Mammary epithelial cell (primary cell): ENCODE measurements at regions of chr11 and their contacts with region 1.

Region 1: GRCh38 chr11:447923-448731 is 2.0 kb upstream of the PTDSS2 start:
- DNase-seq: peak; percentile 81
- H3K4me3 ChIP-seq: peak overlapping the region; percentile 59 to 92 (median 91)
- H3K27ac ChIP-seq: peak overlapping the region; percentile 68
- H3K4me1 ChIP-seq: peaks cover 39% of the 10 kb centered on the region
- H3K27me3 ChIP-seq: no peaks in the 10 kb centered on the region
- CTCF ChIP-seq: peak; percentile 83 to 98

Region 2: GRCh38 chr11:199782-200181 is 248.3 kb before region 1 on chr11:
- CTCF ChIA-PET with region 1: no interaction called
- dilution Hi-C with region 1: no loop called
- in situ Hi-C with region 1: no loop called
- intact Hi-C with region 1: loop called (anchors 5 kb)
- DNase-seq: no peak
- H3K4me3 ChIP-seq: no peak overlapping the region
- H3K27ac ChIP-seq: no peak overlapping the region
- H3K4me1 ChIP-seq: no peaks in the 10 kb centered on the region
- H3K27me3 ChIP-seq: no peaks in the 10 kb centered on the region
- CTCF ChIP-seq: no peak

Region 3: GRCh38 chr11:299951-300735 is 148.0 kb before region 1 on chr11:
- CTCF ChIA-PET with region 1: no interaction called
- dilution Hi-C with region 1: loop called (anchors 5 kb)
- in situ Hi-C with region 1: no loop called
- intact Hi-C with region 1: loop called (anchors 1 kb)
- DNase-seq: no peak
- H3K4me3 ChIP-seq: no peak overlapping the region
- H3K27ac ChIP-seq: no peak overlapping the region
- H3K4me1 ChIP-seq: no peaks in the 10 kb centered on the region
- H3K27me3 ChIP-seq: peaks cover 2% of the 10 kb centered on the region
- CTCF ChIP-seq: no peak

Region 4: GRCh38 chr11:387193-387793 is 60.8 kb before region 1 on chr11:
- CTCF ChIA-PET with region 1: interaction called, 7 read pairs
- dilution Hi-C with region 1: loop called (anchors 5 kb)
- in situ Hi-C with region 1: no loop called
- intact Hi-C with region 1: no loop called
- DNase-seq: no peak
- H3K4me3 ChIP-seq: no peak overlapping the region
- H3K27ac ChIP-seq: no peak overlapping the region
- H3K4me1 ChIP-seq: peaks cover 10% of the 10 kb centered on the region
- H3K27me3 ChIP-seq: no peaks in the 10 kb centered on the region
- CTCF ChIP-seq: peak in 1 of 2 donors; percentile 1

Region 5: GRCh38 chr11:420054-420910 is 27.8 kb before region 1 on chr11:
- CTCF ChIA-PET with region 1: no interaction called
- dilution Hi-C with region 1: no loop called
- in situ Hi-C with region 1: no loop called
- intact Hi-C with region 1: no loop called
- DNase-seq: no peak
- H3K4me3 ChIP-seq: no peak overlapping the region
- H3K27ac ChIP-seq: no peak overlapping the region
- H3K4me1 ChIP-seq: peaks cover 17% of the 10 kb centered on the region
- H3K27me3 ChIP-seq: no peaks in the 10 kb centered on the region
- CTCF ChIP-seq: no peak

Region 6: DNA sequence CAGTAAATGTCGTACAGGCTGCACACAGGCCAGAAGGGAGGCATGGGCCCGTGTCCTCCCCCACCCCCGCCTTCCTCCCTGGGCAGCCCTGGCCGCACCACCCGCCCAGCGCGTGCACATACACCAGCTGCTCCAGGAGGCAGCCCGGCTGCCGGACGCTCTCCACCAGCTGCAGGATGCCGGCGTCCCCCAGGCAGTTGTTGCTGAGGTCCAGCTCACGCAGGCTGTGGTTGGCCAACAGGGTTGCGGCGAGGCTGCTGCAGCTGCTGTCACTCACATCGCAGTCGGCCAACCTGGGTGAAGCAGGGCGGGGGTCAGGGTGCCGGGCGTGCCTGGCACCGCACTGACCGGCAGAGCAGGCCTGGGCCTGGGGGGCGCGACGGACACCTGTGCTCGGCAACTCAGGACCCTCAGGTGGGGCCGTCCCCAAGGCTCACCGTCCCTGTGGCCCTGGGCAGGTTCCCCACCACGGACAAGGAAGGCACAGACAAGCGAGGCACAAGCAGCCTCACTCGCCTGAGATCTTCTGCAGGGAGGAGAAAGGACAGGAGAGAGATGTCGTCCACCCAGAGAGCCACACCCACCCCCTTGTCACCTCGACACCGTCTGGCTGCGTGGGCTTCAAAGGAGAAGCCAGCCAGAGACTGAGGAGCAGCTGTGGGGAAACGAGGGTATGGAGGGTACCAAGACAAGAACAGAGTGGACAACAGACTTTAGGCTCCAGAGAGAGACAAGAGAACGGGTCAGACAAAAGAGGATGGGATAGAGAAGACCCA is 46.8 kb after region 1 on chr11:
- CTCF ChIA-PET with region 1: no interaction called
- dilution Hi-C with region 1: loop called (anchors 5 kb)
- in situ Hi-C with region 1: loop called in 1 of 2 experiments (anchors 5 kb)
- intact Hi-C with region 1: no loop called
- DNase-seq: no peak
- H3K4me3 ChIP-seq: no peak overlapping the region
- H3K27ac ChIP-seq: no peak overlapping the region
- H3K4me1 ChIP-seq: no peaks in the 10 kb centered on the region
- H3K27me3 ChIP-seq: no peaks in the 10 kb centered on the region
- CTCF ChIP-seq: no peak

Region 7: DNA sequence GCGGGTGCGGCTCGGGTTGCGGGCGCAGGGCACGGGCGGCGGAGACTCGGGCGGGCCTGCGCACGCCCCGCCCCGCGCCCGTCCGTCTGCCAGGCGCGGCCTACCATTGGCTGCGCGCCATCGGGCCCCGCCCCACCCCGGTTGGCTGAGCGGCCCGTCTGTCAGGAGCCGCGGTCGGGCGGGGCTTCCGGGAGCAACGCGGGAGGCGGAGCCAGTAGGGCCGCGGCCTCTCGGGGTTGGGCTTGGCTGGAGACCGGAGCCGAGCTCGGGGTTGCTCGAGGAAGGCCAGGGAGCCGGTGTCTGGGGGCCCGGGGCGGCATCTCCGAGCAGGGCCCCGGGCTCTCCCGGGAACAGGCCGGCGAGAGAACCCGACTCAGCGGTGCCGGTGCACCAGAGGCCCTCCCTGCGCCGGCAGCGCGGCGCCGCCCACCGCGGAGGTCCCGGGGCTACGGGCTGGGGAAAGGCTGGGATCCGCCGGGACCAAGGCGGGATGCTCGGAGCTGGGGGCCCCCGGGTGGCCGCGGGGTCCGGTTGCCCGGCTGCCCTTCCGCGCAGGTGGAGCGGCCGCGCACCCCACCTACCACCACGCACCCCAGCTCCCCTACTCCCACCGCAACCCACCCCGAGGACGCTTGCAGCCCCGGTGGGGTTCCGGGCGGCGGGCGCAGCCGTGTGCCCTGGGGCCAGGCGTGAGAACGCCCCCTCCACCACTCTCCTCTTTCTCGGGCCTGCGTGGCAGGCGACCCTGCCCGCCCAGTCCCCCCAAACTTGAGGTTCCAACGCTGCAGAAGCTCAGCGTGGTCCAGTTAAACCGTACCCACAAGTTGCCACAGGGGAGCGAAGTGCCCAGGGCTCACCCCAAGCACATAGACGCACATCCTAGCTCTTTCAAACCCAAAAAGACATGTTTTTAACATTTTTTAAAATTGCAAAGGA is 87.7 kb after region 1 on chr11 and contains the start of gene HRAS:
- CTCF ChIA-PET with region 1: no interaction called
- dilution Hi-C with region 1: no loop called
- in situ Hi-C with region 1: no loop called
- intact Hi-C with region 1: loop called (anchors 1 kb)
- DNase-seq: peak; percentile 93
- H3K4me3 ChIP-seq: peak within 1 kb of the TSS; percentile 87 to 89 (median 88)
- H3K27ac ChIP-seq: peak within 1 kb of the TSS; percentile 82
- H3K4me1 ChIP-seq: peaks cover 38% of the 10 kb centered on the region
- H3K27me3 ChIP-seq: no peaks in the 10 kb centered on the region
- CTCF ChIP-seq: no peak
- total RNA-seq, gene HRAS: 36.5 to 194 TPM

Region 8: DNA sequence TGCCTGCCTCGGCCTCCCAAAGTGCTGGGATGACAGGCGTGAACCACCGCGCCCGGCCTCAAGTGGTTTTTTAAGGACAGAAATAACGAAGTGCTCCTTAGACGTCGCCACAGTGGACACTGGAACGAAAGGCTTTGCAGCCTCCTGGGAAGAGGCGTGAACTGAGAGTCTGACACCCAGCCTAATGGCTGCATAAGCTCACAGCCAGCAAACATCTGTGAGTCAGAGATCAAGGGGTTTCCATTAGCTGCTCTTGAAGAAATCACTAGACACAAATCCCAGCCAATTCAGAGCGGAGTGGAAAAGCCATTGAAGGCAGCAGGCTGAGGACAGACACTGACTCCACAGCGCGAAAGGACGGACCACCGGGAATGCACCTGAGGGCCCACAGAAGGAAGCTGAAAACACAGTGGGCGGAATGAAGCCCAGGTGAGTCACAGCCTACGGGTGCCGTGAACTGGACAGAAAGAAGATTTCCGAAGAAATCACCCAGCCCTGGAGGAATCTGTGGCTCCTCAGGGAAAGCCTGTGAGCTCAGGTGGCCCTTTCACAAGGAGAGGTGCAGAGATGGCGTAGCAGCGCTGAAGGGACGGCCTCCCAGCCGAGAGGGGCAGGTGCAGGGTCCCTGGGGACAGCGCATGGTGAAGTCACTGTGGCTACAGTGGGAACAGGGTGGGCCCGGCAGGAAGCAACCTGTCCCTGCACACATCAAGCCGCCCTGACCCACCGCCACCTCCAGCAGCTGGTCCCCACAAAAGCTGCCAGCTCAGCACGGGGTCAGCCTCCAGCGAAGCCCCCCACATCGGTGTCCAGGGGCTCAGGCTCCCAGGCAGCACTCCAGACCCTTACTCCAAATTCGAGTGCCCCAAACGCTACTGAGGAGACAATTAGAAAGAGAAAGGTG is 100.8 kb after region 1 on chr11:
- CTCF ChIA-PET with region 1: no interaction called
- dilution Hi-C with region 1: no loop called
- in situ Hi-C with region 1: no loop called
- intact Hi-C with region 1: no loop called
- DNase-seq: no peak
- H3K4me3 ChIP-seq: no peak overlapping the region
- H3K27ac ChIP-seq: no peak overlapping the region
- H3K4me1 ChIP-seq: no peaks in the 10 kb centered on the region
- H3K27me3 ChIP-seq: no peaks in the 10 kb centered on the region
- CTCF ChIP-seq: no peak

Region 9: GRCh38 chr11:832321-833113 is 384.4 kb after region 1 on chr11 and contains the start of gene CD151:
- CTCF ChIA-PET with region 1: no interaction called
- dilution Hi-C with region 1: no loop called
- in situ Hi-C with region 1: no loop called
- intact Hi-C with region 1: no loop called
- DNase-seq: peak; percentile 63
- H3K4me3 ChIP-seq: peak within 1 kb of the TSS; percentile 74 to 93 (median 79)
- H3K27ac ChIP-seq: peak within 1 kb of the TSS; percentile 92
- H3K4me1 ChIP-seq: peaks cover 67% of the 10 kb centered on the region
- H3K27me3 ChIP-seq: no peaks in the 10 kb centered on the region
- CTCF ChIP-seq: no peak
- total RNA-seq, gene CD151: 387 to 511 TPM